Heart left ventricle (tissue), 16 donors: ENCODE measurements at regions of chr3 and their contacts with region 1.

Region 1: GRCh38 chr3:105868742-105869530 is at the start of gene CBLB:
- DNase-seq: peak; percentile 93 to 96 (median 95)
- ATAC-seq: peak; percentile 92 to 97 (median 94)
- H3K4me3 ChIP-seq: peak within 1 kb of the TSS; percentile 69 to 98 (median 91)
- H3K27ac ChIP-seq: peak within 1 kb of the TSS; percentile 89 to 99 (median 98)
- H3K4me1 ChIP-seq: peaks cover 0 to 51% (median 36%) of the 10 kb centered on the region in 12 donors
- H3K27me3 ChIP-seq: no peaks in the 10 kb centered on the region
- CTCF ChIP-seq: no peak
- POLR2A ChIP-seq: peak; percentile 75 to 95
- total RNA-seq, gene CBLB: 30.0 to 74.4 (median 44.8) TPM

Region 2: DNA sequence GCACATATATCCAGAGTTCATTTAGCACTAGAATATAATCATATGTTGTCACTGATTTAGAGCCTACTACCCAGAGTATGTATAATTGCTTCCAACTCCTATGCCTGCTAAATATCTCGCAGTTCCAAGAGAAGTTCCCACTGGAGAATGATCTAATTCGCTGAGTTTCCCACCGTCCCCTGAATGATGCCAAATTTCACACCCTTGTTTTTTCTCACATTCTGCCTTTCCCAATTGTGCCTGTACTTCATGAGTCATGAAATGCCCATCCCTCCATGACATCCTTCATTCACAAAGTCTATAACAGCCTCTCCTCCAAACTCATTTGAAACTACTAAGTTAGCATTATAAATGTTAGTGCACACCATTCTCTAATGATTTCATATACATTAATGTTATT is 177.3 kb before region 1 on chr3:
- intact Hi-C with region 1: loop called in 7 of 10 experiments (anchors 5 to 10 kb)
- DNase-seq: no peak
- ATAC-seq: peak; percentile 32 to 71 (median 48)
- H3K4me3 ChIP-seq: no peak overlapping the region
- H3K27ac ChIP-seq: peak overlapping the region in 3 of 12 donors; percentile 2 to 3 (median 3)
- H3K4me1 ChIP-seq: peaks cover 0 to 47% (median 13%) of the 10 kb centered on the region in 12 donors
- H3K27me3 ChIP-seq: no peaks in the 10 kb centered on the region
- CTCF ChIP-seq: no peak
- POLR2A ChIP-seq: no peak

Region 3: GRCh38 chr3:105747060-105747541 is 121.8 kb before region 1 on chr3:
- intact Hi-C with region 1: loop called in 1 of 10 experiments (anchors 10 kb)
- DNase-seq: no peak
- ATAC-seq: peak in 3 of 4 donors; percentile 51 to 83 (median 75)
- H3K4me3 ChIP-seq: no peak overlapping the region
- H3K27ac ChIP-seq: peak overlapping the region in 7 of 12 donors; percentile 22 to 80 (median 45)
- H3K4me1 ChIP-seq: peaks cover 3 to 65% (median 26%) of the 10 kb centered on the region in 12 donors
- H3K27me3 ChIP-seq: no peaks in the 10 kb centered on the region
- CTCF ChIP-seq: no peak
- POLR2A ChIP-seq: no peak

Region 4: DNA sequence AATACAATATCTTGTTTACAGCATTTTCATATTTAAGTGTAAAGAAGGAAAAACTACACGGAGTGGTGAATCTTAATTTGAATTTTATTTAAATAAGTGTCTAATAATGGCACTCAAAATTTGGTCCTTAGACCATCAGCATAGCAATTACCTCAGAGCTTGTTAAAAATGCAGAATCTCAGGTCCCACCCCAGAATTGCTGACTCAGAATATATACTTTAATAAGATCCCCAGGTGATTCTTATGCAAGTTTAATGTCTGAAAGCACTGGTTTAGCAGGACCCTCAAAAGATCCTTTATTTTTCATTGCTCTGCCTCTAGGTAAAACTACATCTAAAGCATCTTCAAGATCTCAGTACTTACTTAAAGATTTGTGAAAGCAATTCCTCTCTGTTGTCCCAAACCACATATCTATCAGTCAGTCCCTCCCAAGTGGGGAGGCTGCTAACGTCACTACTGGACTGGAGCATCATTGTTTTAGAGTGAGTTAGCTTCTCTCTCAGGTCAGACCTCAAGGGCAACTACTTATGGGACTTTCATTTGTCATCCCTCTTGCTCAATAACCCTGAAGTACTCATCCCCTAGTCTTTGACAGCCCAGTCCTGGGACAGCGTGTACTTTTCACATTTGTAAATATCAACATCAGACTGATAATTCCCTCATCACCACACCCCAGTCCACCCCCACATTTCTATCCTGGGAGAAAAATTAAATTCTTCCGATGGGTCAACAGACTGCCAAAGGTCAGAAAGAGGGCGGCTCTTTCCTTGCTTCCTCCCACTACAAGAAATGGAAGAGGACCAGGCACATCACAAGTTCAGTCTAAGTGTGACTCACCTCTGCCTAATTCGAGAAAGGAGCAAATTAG is 76.8 kb before region 1 on chr3:
- intact Hi-C with region 1: loop called in 6 of 10 experiments (anchors 1 to 10 kb)
- DNase-seq: peak; percentile 54 to 88 (median 78)
- ATAC-seq: peak; percentile 90 to 98 (median 94)
- H3K4me3 ChIP-seq: peak overlapping the region in 1 of 12 donors; percentile 30
- H3K27ac ChIP-seq: peak overlapping the region; percentile 56 to 85 (median 81)
- H3K4me1 ChIP-seq: peaks cover 6 to 65% (median 40%) of the 10 kb centered on the region in 12 donors
- H3K27me3 ChIP-seq: no peaks in the 10 kb centered on the region
- CTCF ChIP-seq: no peak
- POLR2A ChIP-seq: peak in 1 of 2 donors; percentile 12

Region 5: GRCh38 chr3:105906836-105907235 is 37.9 kb after region 1 on chr3:
- intact Hi-C with region 1: loop called in 3 of 10 experiments (anchors 2 to 5 kb)
- DNase-seq: peak in 4 of 5 donors; percentile 33 to 70 (median 68)
- ATAC-seq: peak; percentile 92 to 96 (median 94)
- H3K4me3 ChIP-seq: no peak overlapping the region
- H3K27ac ChIP-seq: peak overlapping the region; percentile 52 to 77 (median 68)
- H3K4me1 ChIP-seq: peaks cover 0 to 38% (median 28%) of the 10 kb centered on the region in 12 donors
- H3K27me3 ChIP-seq: no peaks in the 10 kb centered on the region
- CTCF ChIP-seq: no peak
- POLR2A ChIP-seq: no peak

Region 6: DNA sequence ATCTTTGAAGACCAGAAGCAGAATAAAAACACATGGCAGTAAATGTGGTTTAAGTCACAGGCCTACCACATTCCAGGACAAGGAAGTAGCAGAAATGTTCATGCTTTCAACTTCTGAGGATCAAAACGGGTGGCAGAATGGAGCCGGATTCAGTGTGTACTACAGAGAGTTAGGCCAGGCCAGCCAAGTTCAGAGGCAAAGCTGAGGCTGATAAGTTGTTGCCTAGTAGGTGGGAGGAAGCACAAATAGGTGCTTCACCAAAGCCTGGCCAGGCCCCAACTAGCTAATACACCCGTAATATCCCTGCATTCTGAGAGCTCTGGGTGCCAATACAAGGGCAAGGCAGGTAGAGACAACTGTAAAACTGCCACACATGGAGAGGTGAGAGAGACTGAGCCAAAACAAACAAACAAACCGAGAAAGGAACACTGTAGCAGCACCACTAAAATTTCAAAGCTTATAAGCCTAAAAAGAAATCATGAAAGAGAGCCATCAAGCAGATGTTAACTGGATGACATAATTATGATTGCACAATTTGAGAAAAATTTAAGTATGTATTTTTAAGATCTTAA is 156.3 kb after region 1 on chr3:
- intact Hi-C with region 1: no loop called
- DNase-seq: peak in 4 of 5 donors; percentile 20 to 42 (median 34)
- ATAC-seq: peak; percentile 51 to 88 (median 67)
- H3K4me3 ChIP-seq: no peak overlapping the region
- H3K27ac ChIP-seq: peak overlapping the region in 8 of 12 donors; percentile 6 to 43 (median 33)
- H3K4me1 ChIP-seq: peaks cover 0 to 8% (median 0%) of the 10 kb centered on the region in 12 donors
- H3K27me3 ChIP-seq: no peaks in the 10 kb centered on the region
- CTCF ChIP-seq: no peak
- POLR2A ChIP-seq: no peak

Region 7: DNA sequence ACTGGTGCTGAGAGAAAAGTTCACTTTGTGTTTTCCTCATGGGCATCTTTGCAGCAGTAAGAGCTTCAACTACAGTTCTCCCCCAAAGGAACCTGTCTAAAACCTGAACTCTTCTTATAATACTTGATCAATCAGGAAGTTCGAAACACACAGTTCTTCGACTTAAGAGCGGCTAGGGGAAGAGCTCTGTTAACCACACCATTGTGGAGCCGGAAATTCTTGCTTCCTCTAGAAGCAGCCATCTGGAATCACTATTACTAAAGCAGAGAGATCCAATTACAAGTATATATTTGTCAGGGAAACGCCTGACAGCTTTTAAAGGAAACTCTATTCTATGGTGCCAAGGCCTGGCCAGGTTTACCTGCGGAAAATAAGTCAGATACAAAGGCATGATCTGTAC is 337.2 kb after region 1 on chr3:
- intact Hi-C with region 1: loop called in 3 of 10 experiments (anchors 5 to 10 kb)
- DNase-seq: peak in 2 of 5 donors; percentile 15 to 23
- ATAC-seq: peak in 3 of 4 donors; percentile 62 to 91 (median 72)
- H3K4me3 ChIP-seq: peak overlapping the region in 5 of 12 donors; percentile 6 to 25 (median 17)
- H3K27ac ChIP-seq: peak overlapping the region in 8 of 12 donors; percentile 3 to 69 (median 46)
- H3K4me1 ChIP-seq: peaks cover 0 to 27% (median 5%) of the 10 kb centered on the region in 12 donors
- H3K27me3 ChIP-seq: no peaks in the 10 kb centered on the region
- CTCF ChIP-seq: no peak
- POLR2A ChIP-seq: no peak

Region 8: GRCh38 chr3:107064445-107065060 is 1195.6 kb after region 1 on chr3:
- intact Hi-C with region 1: loop called in 1 of 10 experiments (anchors 5 kb)
- DNase-seq: peak in 4 of 5 donors; percentile 57 to 70 (median 64)
- ATAC-seq: peak; percentile 77 to 90 (median 88)
- H3K4me3 ChIP-seq: no peak overlapping the region
- H3K27ac ChIP-seq: peak overlapping the region in 6 of 12 donors; percentile 6 to 37 (median 17)
- H3K4me1 ChIP-seq: peaks cover 0 to 34% (median 18%) of the 10 kb centered on the region in 12 donors
- H3K27me3 ChIP-seq: no peaks in the 10 kb centered on the region
- CTCF ChIP-seq: peak; percentile 71 to 92 (median 82)
- POLR2A ChIP-seq: no peak